HEK293T (cell line): ENCODE measurements at regions of chr9 and their contacts with region 1.

Region 1: DNA sequence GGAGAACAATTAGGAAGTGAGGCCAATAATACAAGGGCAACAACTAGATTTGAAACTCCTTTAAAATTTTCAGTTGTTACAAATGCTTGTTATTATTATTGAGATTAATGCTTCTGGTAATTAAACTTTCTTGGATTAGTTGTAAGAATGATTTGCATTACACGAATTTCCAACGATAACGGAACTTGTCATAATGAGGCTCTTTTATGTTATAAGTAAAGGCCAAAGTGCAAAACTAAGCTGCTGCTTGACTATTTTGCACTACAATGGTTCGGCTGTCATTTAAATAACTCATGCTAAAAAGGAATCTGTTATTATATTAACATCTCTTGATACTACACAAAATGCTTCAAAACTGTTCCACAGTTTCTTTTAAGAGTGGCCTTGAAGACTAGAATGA is 1007.1 kb downstream of the PTPRD start:
- DNase-seq: no peak

Region 2: DNA sequence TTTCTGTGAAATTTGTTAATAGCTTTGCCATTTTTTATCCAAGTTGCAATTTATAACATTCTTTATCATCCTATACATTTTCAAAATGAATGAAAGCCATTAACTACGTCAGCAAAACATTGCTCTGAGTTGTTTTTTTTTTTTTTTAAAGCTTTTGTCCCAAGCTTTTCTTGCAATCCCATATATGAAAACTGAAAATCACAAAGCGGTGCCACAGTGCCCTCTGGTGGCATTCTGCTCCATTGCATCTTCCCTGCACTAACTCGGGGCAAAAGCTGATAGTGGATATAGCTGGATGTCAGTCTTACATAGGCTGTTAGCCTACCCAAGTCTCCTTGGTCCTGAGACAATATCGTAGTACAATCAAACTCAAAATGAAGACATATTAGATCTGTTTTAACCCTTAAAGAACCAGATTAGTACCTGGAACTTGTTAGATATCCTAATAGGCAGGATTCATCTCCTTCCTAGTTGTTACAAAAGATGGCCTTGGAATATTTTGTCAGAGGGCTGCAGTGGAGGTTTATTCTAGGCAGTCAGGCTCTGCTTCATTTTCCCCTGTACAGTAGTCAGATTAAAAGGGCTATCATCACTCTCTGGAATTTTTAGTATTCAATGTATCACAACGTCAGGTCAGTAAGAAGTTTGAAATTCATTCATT is 337.2 kb after region 1 on chr9:
- CTCF ChIA-PET with region 1: interaction called, 13 read pairs
- POLR2A ChIA-PET with region 1: no interaction called
- DNase-seq: peak; percentile 28